ENCODE measurements at regions of chr10 and their contacts with region 1.

Region 1: GRCh38 chr10:15106352-15107013 is 9.3 kb downstream of the RPP38 start:
- DNase-seq: peak; percentile 64 to 80 (median 68)
- ATAC-seq: peak; percentile 99
- H3K4me3 ChIP-seq: no peak overlapping the region
- H3K27ac ChIP-seq: no peak overlapping the region
- H3K4me1 ChIP-seq: no peaks in the 10 kb centered on the region
- H3K27me3 ChIP-seq: no peaks in the 10 kb centered on the region
- CTCF ChIP-seq: peak; percentile 84 to 93 (median 91)
- EP300 ChIP-seq: no peak
- POLR2A ChIP-seq: no peak
- RAD21 ChIP-seq: peak; percentile 91 to 94

Region 2: GRCh38 chr10:14995964-14996565 is 110.4 kb before region 1 on chr10:
- CTCF ChIA-PET with region 1: interaction called, 6 read pairs
- POLR2A ChIA-PET with region 1: no interaction called
- in situ Hi-C with region 1: no loop called
- intact Hi-C with region 1: loop called (anchors 1 kb)
- DNase-seq: no peak
- ATAC-seq: no peak
- H3K4me3 ChIP-seq: no peak overlapping the region
- H3K27ac ChIP-seq: no peak overlapping the region
- H3K4me1 ChIP-seq: no peaks in the 10 kb centered on the region
- H3K27me3 ChIP-seq: peaks cover 0 to 2% of the 10 kb centered on the region in 2 experiments; a peak in 2 of 5 replicates
- CTCF ChIP-seq: no peak
- EP300 ChIP-seq: no peak
- POLR2A ChIP-seq: no peak
- RAD21 ChIP-seq: no peak

Region 3: DNA sequence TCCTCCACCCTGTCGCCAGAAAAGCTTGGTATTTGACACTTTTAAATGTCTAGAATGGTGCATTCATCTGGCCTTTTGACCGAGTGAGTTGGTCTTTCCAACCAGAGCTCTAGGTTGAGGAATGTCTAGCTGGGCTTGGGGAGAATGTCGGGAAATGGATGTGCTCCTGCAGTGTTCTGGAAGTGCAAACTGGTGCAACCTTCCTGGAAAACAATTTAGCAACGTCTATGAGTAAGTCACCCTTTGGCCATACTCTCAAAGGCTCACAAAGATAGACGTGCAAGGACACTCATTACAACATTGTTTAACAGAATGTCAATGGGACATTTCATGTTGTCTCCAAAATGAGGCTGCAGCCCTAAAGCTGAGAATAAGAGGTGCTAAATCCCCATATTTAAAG is 74.3 kb after region 1 on chr10:
- CTCF ChIA-PET with region 1: no interaction called
- POLR2A ChIA-PET with region 1: no interaction called
- in situ Hi-C with region 1: no loop called
- intact Hi-C with region 1: no loop called
- DNase-seq: no peak
- ATAC-seq: no peak
- H3K4me3 ChIP-seq: no peak overlapping the region
- H3K27ac ChIP-seq: no peak overlapping the region
- H3K4me1 ChIP-seq: no peaks in the 10 kb centered on the region; a peak in 2 of 5 replicates
- H3K27me3 ChIP-seq: peaks cover 0 to 8% of the 10 kb centered on the region in 2 experiments; a peak in 1 of 5 replicates
- CTCF ChIP-seq: no peak
- EP300 ChIP-seq: no peak
- POLR2A ChIP-seq: no peak
- RAD21 ChIP-seq: no peak

Region 4: DNA sequence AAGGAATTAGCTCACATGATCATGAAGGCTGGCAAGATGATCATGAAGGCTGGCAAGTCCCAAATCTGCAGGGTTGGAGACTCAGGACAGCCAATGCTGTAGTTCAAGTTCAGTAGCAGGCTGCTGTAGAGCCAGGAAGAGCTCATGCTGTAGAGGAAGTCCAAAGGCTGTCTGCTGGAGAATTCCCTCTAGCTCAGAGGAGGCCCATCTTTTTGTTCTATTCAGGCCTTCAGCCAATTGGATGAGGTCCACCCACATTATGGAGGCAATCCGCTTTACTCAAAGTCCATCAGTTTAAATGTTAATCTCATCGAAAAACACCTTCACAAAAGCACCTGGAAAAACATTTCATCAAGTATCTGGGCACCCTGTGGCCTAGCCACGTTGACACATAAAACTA is 289.5 kb after region 1 on chr10:
- CTCF ChIA-PET with region 1: no interaction called
- POLR2A ChIA-PET with region 1: no interaction called
- in situ Hi-C with region 1: no loop called
- intact Hi-C with region 1: no loop called
- DNase-seq: no peak
- ATAC-seq: no peak
- H3K4me3 ChIP-seq: no peak overlapping the region
- H3K27ac ChIP-seq: no peak overlapping the region
- H3K4me1 ChIP-seq: no peaks in the 10 kb centered on the region
- H3K27me3 ChIP-seq: no peaks in the 10 kb centered on the region; a peak in 1 of 5 replicates
- CTCF ChIP-seq: no peak
- EP300 ChIP-seq: no peak
- POLR2A ChIP-seq: no peak
- RAD21 ChIP-seq: no peak